Esophagus muscularis mucosa (tissue), 4 donors: ENCODE measurements at regions of chr11 and their contacts with region 1.

Region 1: GRCh38 chr11:75388386-75389275 is 10.7 kb upstream of the RPS3 start:
- DNase-seq: no peak
- H3K4me3 ChIP-seq: no peak overlapping the region
- H3K27ac ChIP-seq: no peak overlapping the region
- H3K4me1 ChIP-seq: peaks cover 12 to 20% (median 17%) of the 10 kb centered on the region in 4 donors
- H3K27me3 ChIP-seq: no peaks in the 10 kb centered on the region
- CTCF ChIP-seq: peak; percentile 75 to 86 (median 84)
- EP300 ChIP-seq: no peak
- POLR2A ChIP-seq: no peak

Region 2: GRCh38 chr11:75280227-75280701 is 108.4 kb before region 1 on chr11:
- intact Hi-C with region 1: loop called (anchors 1 kb)
- DNase-seq: peak; percentile 96
- H3K4me3 ChIP-seq: no peak overlapping the region
- H3K27ac ChIP-seq: peak overlapping the region; percentile 32 to 69 (median 46)
- H3K4me1 ChIP-seq: peaks cover 6 to 21% (median 16%) of the 10 kb centered on the region in 4 donors
- H3K27me3 ChIP-seq: no peaks in the 10 kb centered on the region
- CTCF ChIP-seq: peak in 2 of 3 experiments; percentile 97 to 98
- EP300 ChIP-seq: no peak
- POLR2A ChIP-seq: no peak

Region 3: DNA sequence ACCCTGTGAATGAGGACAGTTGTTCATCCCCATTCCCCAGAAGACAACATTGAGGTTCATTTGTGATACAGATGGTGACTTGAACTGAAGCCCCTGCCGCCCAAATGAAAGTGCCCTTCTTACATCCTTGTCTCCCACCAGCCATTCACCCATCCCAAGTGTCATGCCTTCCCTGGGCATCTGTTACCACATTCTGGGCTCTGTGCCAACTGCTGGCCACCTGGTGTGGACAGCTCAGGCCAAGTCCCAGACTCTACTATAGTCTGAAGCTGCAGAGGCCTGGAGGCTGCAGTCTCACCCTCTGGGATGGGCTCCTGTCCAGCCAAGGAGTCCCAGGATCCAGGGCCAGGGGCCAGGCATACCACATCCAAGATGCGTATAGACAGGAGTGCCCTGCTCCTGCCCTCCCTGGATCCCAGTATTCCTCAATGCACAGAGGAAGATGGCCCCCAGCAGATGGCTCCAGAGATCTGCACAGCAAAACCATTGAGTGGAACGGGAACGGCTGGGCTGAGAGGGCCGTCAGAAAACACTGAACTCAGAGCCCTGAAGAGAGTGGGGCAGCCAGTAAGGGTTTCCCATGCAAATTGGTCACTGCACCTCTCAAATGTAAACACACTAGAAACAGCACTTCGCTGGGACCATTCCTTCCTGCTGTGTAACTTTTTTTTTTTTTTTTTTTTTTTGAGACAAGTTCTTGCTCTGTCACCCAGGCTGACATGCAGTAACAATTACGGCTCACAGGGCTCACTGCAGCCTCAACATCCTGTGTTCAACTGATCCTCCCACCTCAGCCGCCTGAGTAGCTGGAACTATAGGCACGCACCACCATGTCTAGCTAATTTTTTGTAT is 60.0 kb before region 1 on chr11:
- intact Hi-C with region 1: loop called (anchors 2 kb)
- DNase-seq: no peak
- H3K4me3 ChIP-seq: no peak overlapping the region
- H3K27ac ChIP-seq: peak overlapping the region; percentile 80 to 98 (median 96)
- H3K4me1 ChIP-seq: peaks cover 28 to 99% (median 95%) of the 10 kb centered on the region in 4 donors
- H3K27me3 ChIP-seq: no peaks in the 10 kb centered on the region
- CTCF ChIP-seq: peak; percentile 75 to 82 (median 82)
- EP300 ChIP-seq: no peak
- POLR2A ChIP-seq: no peak